ENCODE measurements at regions of chr15 and their contacts with region 1.

Region 1: GRCh38 chr15:22838292-22839042 is at the start of gene NIPA2:
- DNase-seq: peak; percentile 97
- ATAC-seq: peak; percentile 98
- H3K4me3 ChIP-seq: peak within 1 kb of the TSS; percentile 85
- H3K27ac ChIP-seq: peak within 1 kb of the TSS; percentile 83
- H3K4me1 ChIP-seq: peaks cover 2% of the 10 kb centered on the region; the same call in 1 of the 2 replicates
- H3K27me3 ChIP-seq: no peaks in the 10 kb centered on the region
- CTCF ChIP-seq: no peak
- POLR2A ChIP-seq: peak; percentile 86
- RAD21 ChIP-seq: no peak; the same call in 1 of the 2 replicates
- total RNA-seq, gene NIPA2: 38.0 and 78.6 TPM in 2 replicates

Region 2: DNA sequence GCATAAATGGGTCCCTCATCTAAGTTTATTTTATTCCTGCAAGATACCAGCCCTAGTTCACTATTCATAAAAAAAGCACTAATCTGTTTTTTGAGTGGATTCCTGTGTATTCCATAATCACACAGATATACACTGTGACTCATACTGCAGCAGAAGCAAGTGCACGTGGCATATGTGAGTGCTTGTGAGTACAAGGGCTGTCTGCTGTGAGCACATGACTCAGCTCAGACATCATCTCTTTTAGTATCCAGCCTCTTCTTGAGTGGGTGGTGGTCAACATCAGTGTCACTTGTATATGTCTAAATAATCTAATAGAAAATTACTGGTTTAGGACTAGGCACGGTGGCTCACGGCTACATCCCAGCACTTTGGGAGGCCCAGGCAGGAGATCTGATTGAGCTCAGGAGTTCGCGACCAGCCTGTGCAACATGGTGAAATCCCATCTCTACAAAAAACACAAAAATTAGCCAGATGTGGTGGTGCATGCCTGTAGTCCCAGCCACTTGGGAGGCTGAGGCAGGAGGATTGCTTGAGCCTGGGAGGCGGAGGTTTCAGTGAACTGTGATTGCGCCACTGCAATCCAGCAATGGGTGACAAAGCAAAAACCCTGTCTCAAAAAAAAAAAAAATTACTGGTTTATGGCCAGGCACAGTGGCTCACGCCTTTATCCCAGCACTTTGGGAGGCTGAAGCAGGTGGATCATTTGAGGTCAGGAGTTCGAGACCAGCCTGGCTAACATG is 49.8 kb after region 1 on chr15:
- CTCF ChIA-PET with region 1: no interaction called
- POLR2A ChIA-PET with region 1: no interaction called
- dilution Hi-C with region 1: no loop called
- in situ Hi-C with region 1: no loop called
- intact Hi-C with region 1: loop called (anchors 5 kb)
- DNase-seq: peak; percentile 99
- ATAC-seq: peak; percentile 95
- H3K4me3 ChIP-seq: no peak overlapping the region
- H3K27ac ChIP-seq: peak overlapping the region; percentile 47; the same call in 1 of the 2 replicates
- H3K4me1 ChIP-seq: peaks cover 7% of the 10 kb centered on the region
- H3K27me3 ChIP-seq: no peaks in the 10 kb centered on the region
- CTCF ChIP-seq: no peak
- POLR2A ChIP-seq: no peak; the same call in 1 of the 2 replicates
- RAD21 ChIP-seq: no peak

Region 3: DNA sequence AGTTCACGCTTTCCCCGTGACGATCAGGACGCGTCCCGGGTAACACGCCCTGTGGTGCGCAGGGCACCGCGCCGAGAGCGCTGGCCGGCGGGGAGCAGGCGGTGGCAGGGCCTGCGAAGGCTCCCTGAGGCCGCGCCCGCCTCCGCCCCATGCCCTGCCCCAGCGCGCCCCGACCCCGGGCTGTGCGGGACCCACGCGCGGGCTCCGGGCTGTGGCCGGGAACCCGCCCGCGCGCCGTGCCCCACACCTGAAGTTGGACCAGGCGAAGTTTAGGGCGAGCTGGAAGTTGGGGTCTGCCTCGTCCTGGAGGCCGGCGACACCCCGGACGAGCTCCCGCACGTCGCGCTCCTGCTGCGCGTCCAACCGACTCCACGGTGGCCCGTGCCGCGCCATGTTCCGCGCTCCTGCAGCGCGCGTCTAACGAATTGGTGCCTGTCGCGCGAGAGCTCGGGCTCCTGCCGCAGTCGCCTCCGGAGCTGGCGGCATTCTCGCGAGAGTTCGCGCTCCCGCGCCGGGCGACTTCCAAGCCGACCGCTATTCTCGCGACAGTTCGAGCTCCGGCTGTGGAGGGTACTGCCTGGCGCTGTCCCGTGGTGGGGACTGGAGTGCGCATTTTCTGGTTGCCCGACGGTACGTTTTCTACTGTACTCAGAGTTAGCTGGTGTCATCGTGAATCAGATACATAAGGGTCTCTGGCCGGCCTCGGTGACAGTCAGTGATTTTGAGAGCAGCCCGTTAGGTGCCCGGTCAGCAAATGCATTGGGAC is 200.9 kb after region 1 on chr15 and contains the start of gene TUBGCP5:
- CTCF ChIA-PET with region 1: no interaction called
- POLR2A ChIA-PET with region 1: no interaction called
- dilution Hi-C with region 1: no loop called
- in situ Hi-C with region 1: no loop called
- intact Hi-C with region 1: no loop called
- DNase-seq: peak; percentile 98
- ATAC-seq: peak; percentile 98
- H3K4me3 ChIP-seq: peak within 1 kb of the TSS; percentile 65
- H3K27ac ChIP-seq: peak within 1 kb of the TSS; percentile 72
- H3K4me1 ChIP-seq: no peaks in the 10 kb centered on the region
- H3K27me3 ChIP-seq: no peaks in the 10 kb centered on the region
- CTCF ChIP-seq: peak; percentile 28; the same call in 1 of the 2 replicates
- POLR2A ChIP-seq: peak; percentile 84
- RAD21 ChIP-seq: no peak
- total RNA-seq, gene TUBGCP5: 19.4 and 20.0 TPM in 2 replicates